Caco-2 (cell line): ENCODE measurements at regions of chr17 and their contacts with region 1.

Region 1: GRCh38 chr17:79810130-79811010 is 13.5 kb upstream of the CBX8 start:
- DNase-seq: peak; percentile 91
- H3K4me3 ChIP-seq: peak overlapping the region; percentile 63
- H3K4me3 Mint-ChIP-seq: peak overlapping the region; percentile 81
- H3K27ac Mint-ChIP-seq: peak overlapping the region; percentile 61
- H3K4me1 ChIP-seq: peaks cover 36% of the 10 kb centered on the region
- H3K4me1 Mint-ChIP-seq: peaks cover 6% of the 10 kb centered on the region
- H3K27me3 ChIP-seq: no peaks in the 10 kb centered on the region
- H3K27me3 Mint-ChIP-seq: no peaks in the 10 kb centered on the region
- CTCF ChIP-seq: no peak

Region 2: GRCh38 chr17:79721993-79722671 is 88.2 kb before region 1 on chr17:
- CTCF ChIA-PET with region 1: interaction called, 9 read pairs
- POLR2A ChIA-PET with region 1: no interaction called
- intact Hi-C with region 1: loop called (anchors 1 kb)
- DNase-seq: peak; percentile 60 to 66
- H3K4me3 ChIP-seq: no peak overlapping the region
- H3K4me3 Mint-ChIP-seq: no peak overlapping the region
- H3K27ac Mint-ChIP-seq: no peak overlapping the region
- H3K4me1 ChIP-seq: no peaks in the 10 kb centered on the region
- H3K4me1 Mint-ChIP-seq: peaks cover 6% of the 10 kb centered on the region
- H3K27me3 ChIP-seq: no peaks in the 10 kb centered on the region
- H3K27me3 Mint-ChIP-seq: no peaks in the 10 kb centered on the region
- CTCF ChIP-seq: peak; percentile 60 to 73

Region 3: GRCh38 chr17:79741751-79742588 is 68.4 kb before region 1 on chr17:
- CTCF ChIA-PET with region 1: interaction called, 37 read pairs
- POLR2A ChIA-PET with region 1: interaction called, 8 read pairs
- intact Hi-C with region 1: no loop called
- DNase-seq: peak; percentile 91 to 98
- H3K4me3 ChIP-seq: peak overlapping the region; percentile 56
- H3K4me3 Mint-ChIP-seq: peak overlapping the region; percentile 75
- H3K27ac Mint-ChIP-seq: peak overlapping the region; percentile 45
- H3K4me1 ChIP-seq: peaks cover 60% of the 10 kb centered on the region
- H3K4me1 Mint-ChIP-seq: peaks cover 21% of the 10 kb centered on the region
- H3K27me3 ChIP-seq: no peaks in the 10 kb centered on the region
- H3K27me3 Mint-ChIP-seq: no peaks in the 10 kb centered on the region
- CTCF ChIP-seq: peak; percentile 95 to 98

Region 4: GRCh38 chr17:79746889-79747507 is 63.4 kb before region 1 on chr17:
- CTCF ChIA-PET with region 1: interaction called, 37 read pairs
- POLR2A ChIA-PET with region 1: interaction called, 8 read pairs
- intact Hi-C with region 1: no loop called
- DNase-seq: no peak
- H3K4me3 ChIP-seq: no peak overlapping the region
- H3K4me3 Mint-ChIP-seq: no peak overlapping the region
- H3K27ac Mint-ChIP-seq: no peak overlapping the region
- H3K4me1 ChIP-seq: peaks cover 39% of the 10 kb centered on the region
- H3K4me1 Mint-ChIP-seq: peaks cover 10% of the 10 kb centered on the region
- H3K27me3 ChIP-seq: no peaks in the 10 kb centered on the region
- H3K27me3 Mint-ChIP-seq: no peaks in the 10 kb centered on the region
- CTCF ChIP-seq: no peak

Region 5: GRCh38 chr17:79796763-79797491 is 13.4 kb before region 1 on chr17 and contains the start of gene CBX8:
- CTCF ChIA-PET with region 1: interaction called, 13 read pairs
- POLR2A ChIA-PET with region 1: interaction called, 21 read pairs
- intact Hi-C with region 1: loop called (anchors 1 kb)
- DNase-seq: peak; percentile 100
- H3K4me3 ChIP-seq: peak within 1 kb of the TSS; percentile 75
- H3K4me3 Mint-ChIP-seq: peak within 1 kb of the TSS; percentile 84
- H3K27ac Mint-ChIP-seq: peak within 1 kb of the TSS; percentile 85
- H3K4me1 ChIP-seq: peaks cover 28% of the 10 kb centered on the region
- H3K4me1 Mint-ChIP-seq: peaks cover 15% of the 10 kb centered on the region
- H3K27me3 ChIP-seq: no peaks in the 10 kb centered on the region
- H3K27me3 Mint-ChIP-seq: no peaks in the 10 kb centered on the region
- CTCF ChIP-seq: peak in 1 of 2 experiments; percentile 24
- total RNA-seq, gene CBX8: 34.3 and 36.6 TPM in 2 replicates

Region 6: GRCh38 chr17:79861413-79862216 is 51.2 kb after region 1 on chr17:
- CTCF ChIA-PET with region 1: no interaction called
- POLR2A ChIA-PET with region 1: no interaction called
- intact Hi-C with region 1: no loop called
- DNase-seq: no peak
- H3K4me3 ChIP-seq: no peak overlapping the region
- H3K4me3 Mint-ChIP-seq: no peak overlapping the region
- H3K27ac Mint-ChIP-seq: peak overlapping the region; percentile 19
- H3K4me1 ChIP-seq: peaks cover 9% of the 10 kb centered on the region
- H3K4me1 Mint-ChIP-seq: peaks cover 19% of the 10 kb centered on the region
- H3K27me3 ChIP-seq: no peaks in the 10 kb centered on the region
- H3K27me3 Mint-ChIP-seq: no peaks in the 10 kb centered on the region
- CTCF ChIP-seq: no peak

Region 7: DNA sequence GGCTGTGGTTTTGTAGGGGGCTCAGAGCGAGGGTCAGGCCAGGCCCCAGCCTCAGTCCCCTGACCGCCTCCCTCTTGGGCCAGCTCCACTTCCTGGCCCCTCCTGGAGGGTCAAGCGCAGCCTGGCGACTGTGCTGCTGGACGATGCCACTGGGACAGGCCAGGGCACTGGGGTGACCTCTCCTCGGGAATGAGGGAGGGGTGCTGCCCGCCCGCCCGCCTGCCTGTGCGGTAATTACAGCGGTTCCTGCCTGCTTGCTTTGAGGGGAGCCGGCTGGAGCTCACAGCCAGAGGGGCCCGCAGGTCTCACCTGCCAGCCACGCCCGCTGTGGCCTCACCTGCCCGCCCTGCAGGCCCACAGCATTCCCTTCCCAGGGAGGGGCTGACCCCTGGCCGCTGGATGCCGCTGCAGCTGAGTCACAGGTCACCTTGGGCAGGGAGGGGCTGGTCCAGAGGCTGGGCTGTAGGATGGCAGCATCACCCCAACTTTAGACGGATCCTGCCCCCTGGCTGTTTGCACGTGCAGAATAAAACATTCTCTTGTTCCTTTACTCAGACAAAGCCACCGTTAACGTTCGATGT is 105.6 kb after region 1 on chr17:
- CTCF ChIA-PET with region 1: interaction called, 16 read pairs
- POLR2A ChIA-PET with region 1: interaction called, 7 read pairs
- intact Hi-C with region 1: loop called (anchors 1 kb)
- DNase-seq: peak; percentile 99
- H3K4me3 ChIP-seq: no peak overlapping the region
- H3K4me3 Mint-ChIP-seq: peak overlapping the region; percentile 52
- H3K27ac Mint-ChIP-seq: peak overlapping the region; percentile 98
- H3K4me1 ChIP-seq: peaks cover 61% of the 10 kb centered on the region
- H3K4me1 Mint-ChIP-seq: peaks cover 22% of the 10 kb centered on the region
- H3K27me3 ChIP-seq: no peaks in the 10 kb centered on the region
- H3K27me3 Mint-ChIP-seq: no peaks in the 10 kb centered on the region
- CTCF ChIP-seq: peak; percentile 36 to 66

Region 8: GRCh38 chr17:79970576-79971068 is 160.3 kb after region 1 on chr17:
- CTCF ChIA-PET with region 1: interaction called, 8 read pairs
- POLR2A ChIA-PET with region 1: interaction called, 3 read pairs
- intact Hi-C with region 1: loop called (anchors 5 kb)
- DNase-seq: peak in 1 of 2 experiments; percentile 57
- H3K4me3 ChIP-seq: no peak overlapping the region
- H3K4me3 Mint-ChIP-seq: no peak overlapping the region
- H3K27ac Mint-ChIP-seq: no peak overlapping the region
- H3K4me1 ChIP-seq: peaks cover 6% of the 10 kb centered on the region; the same call in 1 of the 2 replicates
- H3K4me1 Mint-ChIP-seq: peaks cover 7% of the 10 kb centered on the region
- H3K27me3 ChIP-seq: no peaks in the 10 kb centered on the region
- H3K27me3 Mint-ChIP-seq: no peaks in the 10 kb centered on the region
- CTCF ChIP-seq: peak; percentile 49 to 72